Stomach (tissue), 19 donors: ENCODE measurements at regions of chr16 and their contacts with region 1.

Region 1: DNA sequence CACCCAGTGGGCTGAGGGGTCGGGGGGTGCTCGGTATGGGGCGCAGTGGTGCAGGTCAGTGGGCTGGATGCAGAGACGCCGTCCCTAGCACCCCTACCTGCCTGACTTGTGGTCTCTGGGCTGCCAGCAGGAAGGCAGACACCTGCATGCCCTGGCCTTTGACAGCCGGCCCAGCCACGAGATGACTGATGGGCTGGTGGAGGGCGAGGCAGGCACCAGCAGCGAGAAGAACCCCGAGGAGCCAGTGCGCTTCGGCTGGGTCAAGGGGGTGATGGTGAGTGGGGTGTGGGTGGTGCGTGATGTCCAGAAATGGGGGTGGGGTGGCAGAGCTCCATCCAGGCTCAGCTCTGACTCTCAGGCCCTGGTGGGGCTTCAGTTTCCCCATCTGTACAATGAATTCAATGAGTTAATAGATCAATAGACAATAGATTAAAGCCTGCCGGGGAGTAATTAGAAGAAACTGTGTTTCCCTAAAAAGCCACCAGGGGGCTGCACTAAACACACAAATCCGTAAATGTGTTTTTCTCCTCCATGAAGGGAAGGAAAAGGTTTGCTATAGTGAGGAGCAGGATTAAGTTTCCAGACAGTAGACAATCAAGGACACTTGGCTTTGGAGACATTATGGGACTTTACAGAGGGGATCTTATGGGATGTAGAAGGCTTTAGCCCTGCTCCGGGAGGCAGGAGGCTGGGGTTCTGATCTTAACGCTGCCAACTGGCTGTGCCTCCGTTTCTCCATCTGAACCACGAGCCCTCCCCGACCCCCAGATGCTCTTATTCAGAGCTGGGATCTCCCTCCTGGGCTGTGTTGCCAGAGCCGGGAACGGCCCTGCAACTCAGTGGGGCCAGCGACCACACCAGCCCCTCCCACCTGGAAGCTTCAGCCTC is 2.2 kb downstream of the SLC12A3 start:
- DNase-seq: peak; percentile 53 to 83
- H3K4me3 ChIP-seq: no peak overlapping the region
- H3K27ac ChIP-seq: no peak overlapping the region
- H3K4me1 ChIP-seq: peaks cover 0 to 16% (median 9%) of the 10 kb centered on the region in 4 donors
- H3K27me3 ChIP-seq: no peaks in the 10 kb centered on the region
- CTCF ChIP-seq: peak in 5 of 7 experiments; percentile 57 to 86 (median 83)
- EP300 ChIP-seq: no peak
- POLR2A ChIP-seq: no peak

Region 2: DNA sequence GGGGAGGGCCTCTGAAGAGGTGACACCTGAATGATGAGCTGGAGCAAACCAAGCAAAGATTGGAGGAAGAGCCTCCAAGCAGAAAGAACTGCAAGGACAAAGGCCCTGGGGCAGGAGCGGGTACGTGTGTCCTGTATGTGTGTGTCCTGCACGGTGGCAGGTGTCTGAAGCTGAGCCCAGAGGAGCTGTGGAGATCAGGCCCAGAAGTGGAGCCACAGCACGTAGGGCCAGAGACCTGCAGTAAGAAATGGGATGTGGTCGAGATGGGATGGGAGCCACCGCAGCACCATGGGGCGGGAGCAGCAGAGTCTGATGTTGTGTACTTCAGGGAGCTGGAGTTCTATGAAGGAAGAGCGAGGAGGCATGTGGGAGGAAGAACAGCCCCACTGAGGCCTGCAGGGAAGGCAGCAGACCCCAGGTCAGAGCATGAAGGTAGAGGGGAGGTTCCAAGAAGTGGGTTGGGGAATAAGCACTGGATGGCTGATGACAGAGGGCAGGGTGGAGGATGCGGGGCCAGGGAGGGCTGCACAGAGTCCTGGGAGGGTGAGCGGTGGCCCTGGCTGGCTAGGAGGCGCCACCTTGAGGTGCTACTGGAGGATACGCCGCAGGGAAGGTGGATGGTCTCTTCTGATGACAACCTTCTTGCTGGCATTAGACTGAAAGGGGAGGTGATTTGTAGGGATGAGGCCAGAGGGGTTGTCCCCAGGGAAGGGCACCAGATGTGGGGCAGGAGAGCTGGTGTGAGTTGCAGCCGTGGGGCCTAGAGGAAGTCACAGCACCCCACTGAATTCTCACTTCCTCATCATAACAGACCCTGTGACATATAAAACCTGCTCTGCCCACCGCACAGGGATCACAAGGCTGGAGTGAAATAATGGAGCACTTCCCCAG is 83.9 kb after region 1 on chr16:
- intact Hi-C with region 1: loop called (anchors 5 kb)
- DNase-seq: peak; percentile 70 to 74
- H3K4me3 ChIP-seq: no peak overlapping the region
- H3K27ac ChIP-seq: no peak overlapping the region
- H3K4me1 ChIP-seq: peaks cover 0 to 20% (median 2%) of the 10 kb centered on the region in 4 donors
- H3K27me3 ChIP-seq: no peaks in the 10 kb centered on the region
- CTCF ChIP-seq: peak in 5 of 7 experiments; percentile 33 to 78 (median 59)
- EP300 ChIP-seq: no peak
- POLR2A ChIP-seq: no peak

Region 3: DNA sequence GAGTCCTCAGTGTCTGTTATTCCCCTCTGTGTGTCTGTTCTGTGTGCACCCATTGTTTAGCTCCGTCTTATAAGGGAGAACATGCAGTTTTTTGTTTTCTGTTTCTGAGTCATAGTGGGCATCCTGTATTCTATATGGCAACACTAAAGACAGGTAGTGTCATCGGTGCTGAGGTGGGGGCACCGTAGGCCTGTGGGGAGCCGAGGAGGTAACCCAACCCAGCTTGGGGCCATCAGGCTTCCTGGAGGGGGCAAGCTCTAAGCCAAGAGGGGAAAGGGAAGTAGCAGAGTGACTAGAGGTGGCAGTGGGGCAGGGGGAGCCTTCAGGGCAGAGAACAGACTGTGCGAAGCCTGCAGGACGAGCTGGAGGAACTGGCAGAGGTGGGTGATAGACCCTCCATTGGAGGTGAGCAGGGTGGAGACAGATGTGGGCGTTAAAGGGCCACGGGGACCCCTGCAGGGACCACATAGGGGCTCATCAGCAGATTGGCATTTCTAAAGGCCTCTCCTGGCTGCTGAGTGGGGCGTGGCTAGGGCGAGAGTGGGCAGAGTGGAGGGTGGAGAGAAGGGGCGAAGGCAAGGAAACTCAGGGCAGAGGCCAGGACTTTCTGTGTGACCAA is 261.7 kb after region 1 on chr16:
- intact Hi-C with region 1: no loop called
- DNase-seq: no peak
- H3K4me3 ChIP-seq: no peak overlapping the region
- H3K27ac ChIP-seq: no peak overlapping the region
- H3K4me1 ChIP-seq: no peaks in the 10 kb centered on the region
- H3K27me3 ChIP-seq: no peaks in the 10 kb centered on the region
- CTCF ChIP-seq: no peak
- EP300 ChIP-seq: no peak
- POLR2A ChIP-seq: no peak